ENCODE measurements at regions of chr18 and their contacts with region 1.

Region 1: GRCh38 chr18:11906926-11907874 is 917 bp downstream of the MPPE1 start:
- DNase-seq: no peak
- H3K4me3 ChIP-seq: peak overlapping the region; percentile 82
- H3K4me3 Mint-ChIP-seq: peak overlapping the region; percentile 92 to 97 (median 96)
- H3K27ac ChIP-seq: peak overlapping the region; percentile 72
- H3K27ac Mint-ChIP-seq: peak overlapping the region in 7 of 8 donors; percentile 91 to 97 (median 95)
- H3K4me1 ChIP-seq: peaks cover 18% of the 10 kb centered on the region
- H3K4me1 Mint-ChIP-seq: peaks cover 22 to 49% (median 34%) of the 10 kb centered on the region in 3 donors
- H3K27me3 ChIP-seq: no peaks in the 10 kb centered on the region
- H3K27me3 Mint-ChIP-seq: no peaks in the 10 kb centered on the region

Region 2: GRCh38 chr18:11851806-11852341 is 55.3 kb before region 1 on chr18:
- CTCF ChIA-PET with region 1: interaction called, 3 read pairs
- POLR2A ChIA-PET with region 1: interaction called, 10 read pairs
- DNase-seq: peak; percentile 40 to 76 (median 55)
- H3K4me3 ChIP-seq: peak overlapping the region; percentile 99
- H3K4me3 Mint-ChIP-seq: peak overlapping the region; percentile 99 to 100 (median 100)
- H3K27ac ChIP-seq: peak overlapping the region; percentile 97
- H3K27ac Mint-ChIP-seq: peak overlapping the region; percentile 97 to 100 (median 100)
- H3K4me1 ChIP-seq: peaks cover 22% of the 10 kb centered on the region
- H3K4me1 Mint-ChIP-seq: peaks cover 34 to 64% (median 54%) of the 10 kb centered on the region in 3 donors
- H3K27me3 ChIP-seq: no peaks in the 10 kb centered on the region
- H3K27me3 Mint-ChIP-seq: peaks cover 0 to 3% of the 10 kb centered on the region in 2 donors

Region 3: GRCh38 chr18:11887305-11888262 is 19.6 kb before region 1 on chr18:
- CTCF ChIA-PET with region 1: no interaction called
- POLR2A ChIA-PET with region 1: no interaction called
- DNase-seq: no peak
- H3K4me3 ChIP-seq: no peak overlapping the region
- H3K4me3 Mint-ChIP-seq: no peak overlapping the region
- H3K27ac ChIP-seq: no peak overlapping the region
- H3K27ac Mint-ChIP-seq: peak overlapping the region in 2 of 8 donors; percentile 51 to 82
- H3K4me1 ChIP-seq: no peaks in the 10 kb centered on the region
- H3K4me1 Mint-ChIP-seq: no peaks in the 10 kb centered on the region
- H3K27me3 ChIP-seq: no peaks in the 10 kb centered on the region
- H3K27me3 Mint-ChIP-seq: no peaks in the 10 kb centered on the region

Measured in CD8-positive, alpha-beta memory T cell (primary cell).